Esophagus muscularis mucosa (tissue), 4 donors: ENCODE measurements at regions of chr1 and their contacts with region 1.

Region 1: DNA sequence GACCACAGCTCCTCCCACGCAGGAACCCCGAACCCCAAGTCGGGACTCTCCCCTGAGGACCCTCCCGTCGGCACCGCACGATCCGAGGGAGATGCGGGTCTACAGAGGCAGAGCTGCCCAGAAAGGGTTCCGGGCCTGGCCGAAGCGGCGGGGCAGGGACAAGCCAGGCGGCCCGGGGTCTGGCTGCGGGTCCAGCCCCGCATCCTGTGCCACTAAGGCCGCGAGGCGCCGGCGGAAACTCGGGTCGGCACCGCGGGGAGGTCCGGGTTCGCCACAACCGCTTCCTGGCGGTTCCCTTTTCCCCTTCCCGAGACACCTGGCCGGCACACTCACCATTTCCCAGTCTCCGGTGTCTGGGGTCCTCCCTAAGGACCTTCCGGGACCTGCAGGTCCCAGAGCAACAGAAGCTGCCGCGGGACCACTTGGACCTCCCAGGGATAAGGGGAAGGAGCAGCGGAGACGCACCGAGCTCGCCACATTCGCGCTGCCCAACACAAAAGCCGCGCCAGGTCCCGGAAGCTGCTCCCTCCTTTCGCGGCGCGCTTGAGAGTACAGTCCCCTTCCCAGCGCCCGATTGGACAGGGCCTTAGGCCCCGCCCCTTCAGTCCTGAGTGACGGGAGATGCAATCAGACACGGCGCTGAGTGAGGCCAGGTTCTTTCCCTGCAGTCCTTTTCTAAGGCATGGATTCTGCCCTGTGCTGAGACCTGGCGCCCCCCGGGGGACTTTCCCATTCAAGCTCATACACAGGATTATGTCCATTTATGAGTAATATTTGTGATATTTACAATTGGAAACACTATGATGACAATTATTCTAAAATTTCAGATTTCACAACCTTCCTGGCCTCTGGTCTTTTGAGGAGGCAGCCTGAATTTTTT is at the start of gene ZNF670:
- DNase-seq: peak; percentile 98
- H3K4me3 ChIP-seq: peak within 1 kb of the TSS; percentile 74 to 92 (median 78)
- H3K27ac ChIP-seq: peak within 1 kb of the TSS; percentile 78 to 83 (median 82)
- H3K4me1 ChIP-seq: peaks cover 14 to 28% (median 22%) of the 10 kb centered on the region in 4 donors
- H3K27me3 ChIP-seq: no peaks in the 10 kb centered on the region
- CTCF ChIP-seq: no peak
- EP300 ChIP-seq: no peak
- POLR2A ChIP-seq: no peak
- total RNA-seq, gene ZNF670: 2.1 to 4.0 (median 2.3) TPM

Region 2: DNA sequence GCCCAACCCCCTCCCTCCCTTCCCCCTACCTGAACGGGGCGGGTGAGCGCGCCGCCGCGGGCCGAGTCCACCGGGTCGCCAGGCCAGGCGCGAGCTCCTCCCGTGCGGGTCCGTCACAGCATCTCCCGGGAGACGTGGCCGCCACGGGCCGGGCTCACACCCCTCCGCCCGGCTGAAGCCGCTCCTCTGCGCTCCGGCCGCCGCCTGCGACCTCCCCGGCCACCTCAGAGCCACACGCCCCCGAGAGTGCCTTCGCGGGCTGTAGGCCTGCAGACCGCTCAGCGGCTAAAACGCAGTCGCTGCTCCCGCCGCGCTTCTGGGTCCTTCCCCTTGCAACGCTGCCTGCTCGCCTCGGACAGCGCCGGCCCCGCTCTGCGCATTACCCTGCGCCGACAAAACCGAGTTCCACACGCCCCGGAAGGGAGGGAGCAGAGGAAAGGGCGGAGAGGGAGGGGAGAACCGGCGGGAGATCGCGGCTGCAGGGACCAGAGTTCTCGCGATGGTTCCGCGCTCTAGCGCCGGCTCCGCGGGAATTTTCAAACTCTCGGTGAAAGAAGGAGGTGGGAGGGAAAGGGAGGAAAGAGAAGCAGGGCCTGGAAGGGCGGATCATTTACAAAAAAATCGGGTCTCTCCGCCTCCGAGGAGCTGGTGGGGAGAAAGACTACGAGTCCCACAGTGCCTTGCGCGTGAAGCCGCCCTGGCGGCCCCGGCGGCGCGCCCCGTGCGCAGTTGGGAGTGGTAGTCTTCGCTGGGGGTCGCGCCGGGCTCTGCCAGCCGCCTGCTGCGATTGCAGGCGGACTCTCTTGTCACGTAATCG is 146.7 kb before region 1 on chr1 and contains the start of gene AHCTF1:
- intact Hi-C with region 1: loop called (anchors 2 kb)
- DNase-seq: peak; percentile 98
- H3K4me3 ChIP-seq: peak within 1 kb of the TSS; percentile 89 to 99 (median 96)
- H3K27ac ChIP-seq: peak within 1 kb of the TSS; percentile 95 to 99 (median 98)
- H3K4me1 ChIP-seq: peaks cover 23 to 48% (median 46%) of the 10 kb centered on the region in 4 donors
- H3K27me3 ChIP-seq: no peaks in the 10 kb centered on the region
- CTCF ChIP-seq: peak in 1 of 3 experiments; percentile 2
- EP300 ChIP-seq: no peak
- POLR2A ChIP-seq: peak; percentile 91
- total RNA-seq, gene AHCTF1: 30.7 to 45.3 (median 42.0) TPM

Region 3: DNA sequence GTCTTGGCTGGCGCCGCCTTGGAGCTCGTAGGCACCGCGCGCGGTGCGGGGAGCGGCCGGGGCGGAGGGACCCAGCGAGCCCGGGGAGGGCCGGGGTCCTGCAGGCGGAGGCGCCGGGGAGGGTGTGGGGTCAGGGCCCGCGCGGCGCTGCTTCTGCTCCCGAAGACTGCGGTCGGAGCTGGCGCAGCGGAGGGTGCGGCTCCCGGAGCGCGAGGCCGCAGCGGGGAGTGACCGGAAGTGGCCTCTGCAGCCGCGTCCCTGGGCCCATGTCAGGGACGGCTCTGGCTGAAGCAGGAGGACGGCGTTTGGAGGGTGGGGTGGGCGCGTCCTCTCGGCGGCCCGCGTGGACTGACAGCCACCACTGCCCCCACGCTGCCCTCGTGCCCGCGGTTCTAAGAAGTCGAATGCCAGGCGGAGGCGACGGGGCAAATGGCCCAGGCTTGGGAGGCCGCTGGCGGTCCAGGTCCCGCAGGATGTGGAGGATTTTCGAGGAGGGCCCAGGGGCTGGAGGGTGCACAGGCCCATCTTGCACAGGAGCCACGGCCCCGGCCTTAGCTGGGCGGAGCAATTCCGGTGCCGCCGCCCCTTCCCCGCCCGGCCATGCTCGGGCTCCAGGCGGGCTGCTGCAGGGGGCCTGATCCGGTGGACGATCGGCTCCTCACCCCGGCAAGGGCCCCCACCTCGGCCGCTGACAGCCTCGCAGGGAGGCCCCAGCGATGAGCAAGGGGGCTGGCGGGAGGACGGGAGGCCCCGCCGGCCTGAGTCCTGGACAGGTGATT is 33.4 kb after region 1 on chr1:
- intact Hi-C with region 1: loop called (anchors 5 kb)
- DNase-seq: peak; percentile 88
- H3K4me3 ChIP-seq: peak overlapping the region; percentile 72 to 97 (median 86)
- H3K27ac ChIP-seq: peak overlapping the region; percentile 89 to 95 (median 92)
- H3K4me1 ChIP-seq: peaks cover 12 to 26% (median 22%) of the 10 kb centered on the region in 4 donors
- H3K27me3 ChIP-seq: no peaks in the 10 kb centered on the region
- CTCF ChIP-seq: no peak
- EP300 ChIP-seq: no peak
- POLR2A ChIP-seq: no peak